ENCODE measurements at regions of chr22 and their contacts with region 1.

Region 1: DNA sequence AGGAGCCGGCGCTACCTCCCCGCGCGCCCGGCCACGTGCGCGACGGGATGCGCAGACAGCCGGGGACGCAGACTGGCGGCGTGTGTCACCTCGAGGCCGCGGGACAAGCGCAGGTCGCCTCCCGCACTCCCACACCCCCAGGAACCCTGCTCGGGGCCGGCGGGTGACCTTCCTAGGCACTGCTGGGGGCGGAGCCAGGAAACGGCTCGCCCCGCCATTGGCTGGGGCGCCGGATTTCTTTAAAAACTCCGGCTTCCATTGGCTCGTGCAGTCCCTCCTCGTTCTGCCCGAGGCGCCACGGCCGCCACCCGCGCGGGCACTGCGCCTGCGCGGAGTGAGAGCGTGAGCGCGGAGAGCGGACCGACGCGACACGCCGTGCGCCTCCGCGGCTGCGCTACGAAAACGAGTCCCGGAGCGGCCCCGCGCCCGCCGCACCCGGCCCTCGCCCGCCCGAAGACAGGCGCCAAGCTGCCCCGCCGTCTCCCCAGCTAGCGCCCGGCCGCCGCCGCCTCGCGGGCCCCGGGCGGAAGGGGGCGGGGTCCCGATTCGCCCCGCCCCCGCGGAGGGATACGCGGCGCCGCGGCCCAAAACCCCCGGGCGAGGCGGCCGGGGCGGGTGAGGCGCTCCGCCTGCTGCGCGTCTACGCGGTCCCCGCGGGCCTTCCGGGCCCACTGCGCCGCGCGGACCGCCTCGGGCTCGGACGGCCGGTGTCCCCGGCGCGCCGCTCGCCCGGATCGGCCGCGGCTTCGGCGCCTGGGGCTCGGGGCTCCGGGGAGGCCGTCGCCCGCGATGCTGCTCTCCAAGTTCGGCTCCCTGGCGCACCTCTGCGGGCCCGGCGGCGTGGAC is at the start of gene PIM3:
- DNase-seq: peak; percentile 87 to 98 (median 94)

Region 2: GRCh38 chr22:49869845-49870712 is 90.3 kb before region 1 on chr22:
- intact Hi-C with region 1: no loop called
- DNase-seq: no peak

Region 3: DNA sequence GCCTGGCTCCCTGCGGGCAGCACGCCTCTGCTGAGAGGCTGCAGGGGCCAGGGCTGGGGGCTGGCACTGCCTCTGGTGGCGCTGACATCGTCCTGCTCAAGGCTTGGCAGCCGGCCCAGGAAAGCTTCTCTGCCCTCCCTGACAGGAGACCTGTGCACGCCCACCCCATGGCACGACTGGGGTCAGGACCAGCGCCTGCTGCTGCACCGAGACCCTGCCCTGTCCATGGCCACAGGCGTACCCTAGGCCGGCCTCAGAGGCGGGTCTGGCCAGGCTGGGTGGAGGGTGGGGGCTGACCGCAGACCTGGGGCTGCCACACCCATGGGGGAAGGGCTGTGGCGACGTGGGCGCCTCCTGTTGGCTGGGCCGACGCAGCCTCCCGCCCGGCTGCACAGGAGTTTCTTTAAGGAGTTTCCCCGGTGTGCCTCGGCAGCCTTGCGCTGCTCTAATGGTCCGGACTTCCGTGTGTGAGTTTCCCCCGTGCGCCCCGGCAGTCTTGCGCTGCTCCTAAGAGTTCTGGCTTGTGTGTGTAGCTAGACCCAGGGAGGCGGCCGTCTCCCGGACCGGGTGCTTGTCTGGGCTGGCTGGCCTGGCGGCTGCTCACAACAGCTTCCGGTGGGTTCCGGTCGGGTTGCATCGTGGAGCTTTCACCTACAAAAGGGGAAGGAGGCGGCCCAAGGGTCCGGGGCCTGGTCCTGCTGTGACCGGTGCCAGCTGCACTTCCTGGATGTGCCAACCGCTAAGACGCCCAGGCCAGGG is 230.0 kb after region 1 on chr22:
- intact Hi-C with region 1: loop called (anchors 10 kb)
- DNase-seq: peak in 18 of 42 donors; percentile 32 to 75 (median 54)

Measured in head of caudate nucleus (tissue), 42 donors.